Activated CD4-positive, alpha-beta memory T cell treated with anti-CD3 and anti-CD28 coated beads for 36 hours (primary cell): ENCODE measurements at regions of chr3 and their contacts with region 1.

Region 1: DNA sequence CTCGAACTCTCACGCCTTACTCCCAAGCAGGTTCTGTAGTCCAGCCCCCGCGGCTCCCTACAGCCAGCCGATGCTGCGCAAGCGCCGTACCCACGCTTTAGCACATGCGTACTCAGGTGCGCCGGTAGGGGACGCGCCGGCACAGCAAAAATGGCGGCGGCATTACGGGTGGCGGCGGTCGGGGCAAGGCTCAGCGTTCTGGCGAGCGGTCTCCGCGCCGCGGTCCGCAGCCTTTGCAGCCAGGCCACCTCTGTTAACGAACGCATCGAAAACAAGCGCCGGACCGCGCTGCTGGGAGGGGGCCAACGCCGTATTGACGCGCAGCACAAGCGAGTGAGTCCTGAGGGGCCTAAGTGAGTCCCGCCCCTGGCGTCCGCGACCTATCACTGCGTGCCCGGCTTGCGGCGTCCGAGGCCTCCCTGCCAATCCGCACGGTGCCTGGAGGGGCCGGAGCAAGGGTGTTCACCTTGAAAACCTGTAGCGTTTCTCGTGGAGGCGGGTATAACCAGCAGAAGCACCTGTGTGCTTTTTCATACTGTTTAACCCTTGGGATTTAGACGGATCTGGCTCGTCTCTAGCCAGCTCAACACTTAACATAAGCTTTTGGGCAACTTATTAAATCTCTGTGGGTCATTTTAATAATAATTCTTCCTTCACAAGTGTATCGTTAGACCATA is at the start of gene PCCB:
- DNase-seq: peak; percentile 95
- H3K4me3 Mint-ChIP-seq: peak within 1 kb of the TSS; percentile 86
- H3K27ac Mint-ChIP-seq: peak within 1 kb of the TSS; percentile 88
- H3K4me1 Mint-ChIP-seq: peaks cover 18% of the 10 kb centered on the region
- H3K27me3 Mint-ChIP-seq: no peaks in the 10 kb centered on the region
- total RNA-seq, gene PCCB: 54.5 to 58.9 TPM

Region 2: GRCh38 chr3:136142592-136142991 is 107.8 kb before region 1 on chr3:
- CTCF ChIA-PET with region 1: no interaction called
- POLR2A ChIA-PET with region 1: no interaction called
- intact Hi-C with region 1: loop called (anchors 5 kb)
- DNase-seq: no peak
- H3K4me3 Mint-ChIP-seq: no peak overlapping the region
- H3K27ac Mint-ChIP-seq: no peak overlapping the region
- H3K4me1 Mint-ChIP-seq: peaks cover 27% of the 10 kb centered on the region
- H3K27me3 Mint-ChIP-seq: no peaks in the 10 kb centered on the region

Region 3: GRCh38 chr3:136196401-136197158 is 53.8 kb before region 1 on chr3:
- CTCF ChIA-PET with region 1: interaction called, 3 read pairs
- POLR2A ChIA-PET with region 1: interaction called, 9 read pairs
- intact Hi-C with region 1: loop called (anchors 1 kb)
- DNase-seq: peak; percentile 100
- H3K4me3 Mint-ChIP-seq: peak overlapping the region; percentile 95
- H3K27ac Mint-ChIP-seq: peak overlapping the region; percentile 99
- H3K4me1 Mint-ChIP-seq: peaks cover 18% of the 10 kb centered on the region
- H3K27me3 Mint-ChIP-seq: peaks cover 5% of the 10 kb centered on the region

Region 4: GRCh38 chr3:136270179-136270578 is 19.8 kb after region 1 on chr3:
- CTCF ChIA-PET with region 1: interaction called, 3 read pairs
- POLR2A ChIA-PET with region 1: no interaction called
- intact Hi-C with region 1: loop called (anchors 2 kb)
- DNase-seq: peak; percentile 28
- H3K4me3 Mint-ChIP-seq: no peak overlapping the region
- H3K27ac Mint-ChIP-seq: no peak overlapping the region
- H3K4me1 Mint-ChIP-seq: peaks cover 34% of the 10 kb centered on the region
- H3K27me3 Mint-ChIP-seq: no peaks in the 10 kb centered on the region

Region 5: GRCh38 chr3:136390574-136390973 is 140.2 kb after region 1 on chr3:
- CTCF ChIA-PET with region 1: no interaction called
- POLR2A ChIA-PET with region 1: no interaction called
- intact Hi-C with region 1: loop called (anchors 1 kb)
- DNase-seq: no peak
- H3K4me3 Mint-ChIP-seq: no peak overlapping the region
- H3K27ac Mint-ChIP-seq: no peak overlapping the region
- H3K4me1 Mint-ChIP-seq: peaks cover 1% of the 10 kb centered on the region
- H3K27me3 Mint-ChIP-seq: no peaks in the 10 kb centered on the region

Region 6: GRCh38 chr3:137013955-137014688 is 763.8 kb after region 1 on chr3:
- CTCF ChIA-PET with region 1: no interaction called
- POLR2A ChIA-PET with region 1: no interaction called
- intact Hi-C with region 1: loop called (anchors 2 kb)
- DNase-seq: peak; percentile 89
- H3K4me3 Mint-ChIP-seq: peak overlapping the region; percentile 55
- H3K27ac Mint-ChIP-seq: no peak overlapping the region
- H3K4me1 Mint-ChIP-seq: peaks cover 7% of the 10 kb centered on the region
- H3K27me3 Mint-ChIP-seq: no peaks in the 10 kb centered on the region